B cell (primary cell): ENCODE measurements at regions of chr1 and their contacts with region 1.

Region 1: GRCh38 chr1:52404116-52404986 is at the starts of genes ORC1 and PRPF38A:
- DNase-seq: peak; percentile 98
- ATAC-seq: peak; percentile 98
- H3K4me3 ChIP-seq: peak within 1 kb of the TSS; percentile 76 to 99 (median 95)
- H3K4me3 Mint-ChIP-seq: peak within 1 kb of the TSS; percentile 100
- H3K27ac ChIP-seq: peak within 1 kb of the TSS; percentile 91 to 95
- H3K27ac Mint-ChIP-seq: peak within 1 kb of the TSS; percentile 96
- H3K4me1 ChIP-seq: peaks cover 15 to 22% of the 10 kb centered on the region in 2 donors
- H3K4me1 Mint-ChIP-seq: peaks cover 32% of the 10 kb centered on the region
- H3K27me3 ChIP-seq: no peaks in the 10 kb centered on the region
- H3K27me3 Mint-ChIP-seq: no peaks in the 10 kb centered on the region
- CTCF ChIP-seq: peak; percentile 60
- total RNA-seq, gene ORC1: 1.3 TPM in 2 replicates
- total RNA-seq, gene PRPF38A: 68.1 and 69.8 TPM in 2 replicates

Region 2: DNA sequence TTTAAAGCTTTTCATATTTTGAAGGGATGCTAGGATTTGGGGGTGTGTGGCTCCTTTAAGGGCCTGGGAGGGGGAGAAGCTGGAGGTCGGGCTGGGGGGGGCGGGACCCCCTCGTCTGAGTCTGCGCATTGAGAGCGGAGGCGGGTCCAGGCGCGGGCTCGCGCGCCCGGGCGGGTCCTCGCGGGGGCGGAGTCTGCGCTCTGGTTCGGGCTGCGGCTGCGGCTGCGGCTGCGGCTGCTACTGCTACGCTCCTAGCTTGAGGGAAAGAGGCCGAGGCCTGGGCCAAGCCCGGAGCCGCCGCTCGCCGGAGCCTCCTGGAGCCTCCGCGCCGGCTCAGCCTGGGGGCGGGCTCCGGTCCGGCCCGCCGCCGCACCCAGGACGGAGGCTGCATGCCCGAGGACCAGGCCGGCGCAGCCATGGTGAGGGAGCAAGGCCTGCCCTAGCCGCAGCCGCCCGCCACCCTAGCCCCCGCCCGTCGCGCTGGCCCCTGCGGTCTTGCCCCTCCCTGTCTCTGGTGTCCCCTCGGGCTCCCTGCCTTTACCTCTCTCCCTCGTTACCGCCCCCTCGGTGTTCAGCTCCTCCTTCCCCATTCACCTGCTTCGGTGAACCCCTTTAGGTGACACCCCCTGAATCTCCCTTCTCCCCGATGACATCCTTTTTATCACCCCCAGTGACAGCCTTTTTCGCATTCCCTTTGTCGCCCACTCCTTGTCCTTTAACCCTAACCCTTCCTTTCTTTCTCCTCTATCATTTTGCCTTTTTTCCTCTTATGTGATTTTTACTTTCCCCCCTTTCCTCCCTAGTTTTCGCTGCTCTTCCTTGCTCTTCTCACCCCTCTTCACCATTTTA is 322.1 kb after region 1 on chr1 and contains the start of gene ZYG11B:
- CTCF ChIA-PET with region 1: no interaction called
- POLR2A ChIA-PET with region 1: no interaction called
- intact Hi-C with region 1: loop called (anchors 1 kb)
- DNase-seq: peak; percentile 95
- ATAC-seq: peak; percentile 95
- H3K4me3 ChIP-seq: peak within 1 kb of the TSS; percentile 56 to 92 (median 76)
- H3K4me3 Mint-ChIP-seq: peak within 1 kb of the TSS; percentile 95
- H3K27ac ChIP-seq: peak within 1 kb of the TSS in 1 of 2 donors; percentile 66
- H3K27ac Mint-ChIP-seq: peak within 1 kb of the TSS; percentile 88
- H3K4me1 ChIP-seq: peaks cover 8 to 12% of the 10 kb centered on the region in 2 donors
- H3K4me1 Mint-ChIP-seq: peaks cover 35% of the 10 kb centered on the region
- H3K27me3 ChIP-seq: no peaks in the 10 kb centered on the region
- H3K27me3 Mint-ChIP-seq: peaks cover 4% of the 10 kb centered on the region
- CTCF ChIP-seq: no peak
- total RNA-seq, gene ZYG11B: 22.3 and 22.7 TPM in 2 replicates

Region 3: GRCh38 chr1:52927212-52928014 is 523.1 kb after region 1 on chr1 and contains the start of gene SCP2:
- CTCF ChIA-PET with region 1: no interaction called
- POLR2A ChIA-PET with region 1: no interaction called
- intact Hi-C with region 1: loop called (anchors 10 kb)
- DNase-seq: peak; percentile 72
- ATAC-seq: peak; percentile 86
- H3K4me3 ChIP-seq: peak within 1 kb of the TSS; percentile 59 to 85 (median 82)
- H3K4me3 Mint-ChIP-seq: peak within 1 kb of the TSS; percentile 89
- H3K27ac ChIP-seq: peak within 1 kb of the TSS in 1 of 2 donors; percentile 61
- H3K27ac Mint-ChIP-seq: peak within 1 kb of the TSS; percentile 22
- H3K4me1 ChIP-seq: peaks cover 10 to 19% of the 10 kb centered on the region in 2 donors
- H3K4me1 Mint-ChIP-seq: peaks cover 19% of the 10 kb centered on the region
- H3K27me3 ChIP-seq: peaks cover 0 to 20% (median 7%) of the 10 kb centered on the region in 4 experiments
- H3K27me3 Mint-ChIP-seq: peaks cover 12% of the 10 kb centered on the region
- CTCF ChIP-seq: no peak
- total RNA-seq, gene SCP2: 45.0 and 46.6 TPM in 2 replicates